ENCODE measurements at regions of chr2 and their contacts with region 1.

Region 1: GRCh38 chr2:197628043-197628500 is 47.3 kb downstream of the RFTN2 start:
- DNase-seq: peak; percentile 21 to 91 (median 64)

Region 2: DNA sequence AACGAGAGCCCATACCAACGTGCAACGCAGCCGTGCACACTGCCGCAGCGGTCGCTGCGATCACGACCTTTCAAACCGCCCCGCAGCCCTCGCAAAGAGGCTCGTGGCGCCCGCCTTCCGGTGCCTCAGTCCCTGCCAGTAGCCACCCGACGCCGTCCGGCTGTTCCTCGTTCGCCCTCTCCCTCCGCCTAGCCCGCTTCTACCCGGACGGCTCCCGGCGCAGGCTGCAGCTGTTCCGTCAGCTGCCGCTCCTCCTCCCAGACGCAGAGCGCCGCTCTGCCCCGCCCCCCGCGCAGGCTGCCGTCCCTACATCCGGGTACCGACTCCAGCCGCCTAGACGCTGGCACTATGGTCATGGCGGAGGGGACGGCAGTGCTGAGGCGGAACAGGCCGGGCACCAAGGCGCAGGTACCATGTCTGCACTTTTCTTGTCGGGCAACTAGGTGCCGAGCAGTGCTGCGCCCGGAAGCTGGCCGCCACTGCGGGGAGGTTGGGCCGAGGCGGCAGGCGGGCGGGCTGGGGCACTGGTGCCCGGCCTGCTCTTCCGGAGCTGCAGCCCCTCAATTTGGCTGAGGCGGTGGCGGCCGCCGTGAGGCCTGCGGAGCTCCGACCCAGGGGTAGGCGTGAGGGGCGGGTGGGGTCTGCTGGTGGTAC is 112.2 kb before region 1 on chr2 and contains the start of gene MOB4:
- intact Hi-C with region 1: loop called (anchors 10 kb)
- DNase-seq: peak; percentile 86 to 98 (median 96)

Region 3: GRCh38 chr2:197675711-197676188 is 47.7 kb after region 1 on chr2:
- intact Hi-C with region 1: loop called (anchors 10 kb)
- DNase-seq: peak in 38 of 42 donors; percentile 10 to 77 (median 39)

Region 4: GRCh38 chr2:197894751-197895274 is 266.7 kb after region 1 on chr2:
- intact Hi-C with region 1: no loop called
- DNase-seq: no peak

Region 5: GRCh38 chr2:197972061-197972460 is 344.0 kb after region 1 on chr2:
- intact Hi-C with region 1: no loop called
- DNase-seq: peak in 19 of 42 donors; percentile 9 to 68 (median 43)

Measured in head of caudate nucleus (tissue), 42 donors.